Colonic mucosa (tissue), 4 donors: ENCODE measurements at regions of chr5 and their contacts with region 1.

Region 1: GRCh38 chr5:44774279-44774880 is 34.4 kb upstream of the MRPS30 start:
- DNase-seq: no peak
- H3K4me3 ChIP-seq: no peak overlapping the region
- H3K27ac ChIP-seq: no peak overlapping the region
- H3K4me1 ChIP-seq: no peaks in the 10 kb centered on the region
- H3K27me3 ChIP-seq: no peaks in the 10 kb centered on the region
- CTCF ChIP-seq: peak; percentile 32

Region 2: GRCh38 chr5:43631182-43631910 is 1143.0 kb before region 1 on chr5:
- intact Hi-C with region 1: loop called (anchors 10 kb)
- DNase-seq: peak; percentile 44
- H3K4me3 ChIP-seq: no peak overlapping the region
- H3K27ac ChIP-seq: no peak overlapping the region
- H3K4me1 ChIP-seq: no peaks in the 10 kb centered on the region
- H3K27me3 ChIP-seq: no peaks in the 10 kb centered on the region
- CTCF ChIP-seq: peak; percentile 54

Region 3: DNA sequence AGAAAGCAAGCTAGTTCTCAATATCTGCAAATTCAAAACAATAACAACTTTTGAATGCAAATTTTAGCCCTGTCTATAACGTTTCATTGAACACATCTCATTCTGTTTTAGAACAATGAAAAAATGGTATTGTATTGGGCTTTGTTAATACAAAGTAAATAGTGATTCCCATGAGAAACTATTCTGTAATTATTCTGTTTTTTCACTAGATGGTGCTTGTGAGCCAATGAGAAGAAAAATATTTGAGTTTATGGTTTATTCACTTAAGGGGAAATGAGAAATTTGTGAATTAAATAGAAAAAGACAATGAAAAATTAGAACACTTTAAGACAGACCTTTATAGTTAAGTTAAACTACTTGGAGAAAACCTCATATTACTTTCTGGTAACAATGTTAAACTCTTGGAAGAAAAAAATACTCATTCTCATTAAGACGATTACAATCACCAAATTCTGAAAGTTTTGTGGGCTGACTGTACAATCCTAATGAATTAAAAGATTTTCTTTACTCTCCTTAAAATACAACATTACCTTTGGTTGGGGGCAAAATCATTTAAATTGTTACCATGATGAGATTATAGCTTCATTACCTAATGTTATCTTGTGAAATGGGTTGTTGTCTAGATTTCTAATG is 1044.4 kb before region 1 on chr5:
- intact Hi-C with region 1: loop called (anchors 5 kb)
- DNase-seq: no peak
- H3K4me3 ChIP-seq: no peak overlapping the region
- H3K27ac ChIP-seq: no peak overlapping the region
- H3K4me1 ChIP-seq: no peaks in the 10 kb centered on the region
- H3K27me3 ChIP-seq: no peaks in the 10 kb centered on the region
- CTCF ChIP-seq: peak; percentile 33

Region 4: GRCh38 chr5:44814761-44815160 is 40.4 kb after region 1 on chr5:
- intact Hi-C with region 1: no loop called
- DNase-seq: no peak
- H3K4me3 ChIP-seq: no peak overlapping the region
- H3K27ac ChIP-seq: no peak overlapping the region
- H3K4me1 ChIP-seq: no peaks in the 10 kb centered on the region
- H3K27me3 ChIP-seq: no peaks in the 10 kb centered on the region
- CTCF ChIP-seq: no peak